Natural killer cell (primary cell): ENCODE measurements at regions of chr1 and their contacts with region 1.

Region 1: GRCh38 chr1:208500375-208500774 is 256.2 kb upstream of the PLXNA2 start:
- DNase-seq: no peak
- ATAC-seq: no peak
- H3K4me3 ChIP-seq: no peak overlapping the region
- H3K4me3 Mint-ChIP-seq: no peak overlapping the region
- H3K27ac ChIP-seq: no peak overlapping the region
- H3K27ac Mint-ChIP-seq: no peak overlapping the region
- H3K4me1 ChIP-seq: no peaks in the 10 kb centered on the region
- H3K4me1 Mint-ChIP-seq: no peaks in the 10 kb centered on the region
- H3K27me3 ChIP-seq: no peaks in the 10 kb centered on the region
- H3K27me3 Mint-ChIP-seq: peaks cover 3 to 6% of the 10 kb centered on the region in 2 donors
- CTCF ChIP-seq: no peak

Region 2: GRCh38 chr1:208445758-208446203 is 54.6 kb before region 1 on chr1:
- intact Hi-C with region 1: loop called (anchors 10 kb)
- DNase-seq: no peak
- ATAC-seq: no peak
- H3K4me3 ChIP-seq: no peak overlapping the region
- H3K4me3 Mint-ChIP-seq: no peak overlapping the region
- H3K27ac ChIP-seq: no peak overlapping the region
- H3K27ac Mint-ChIP-seq: no peak overlapping the region
- H3K4me1 ChIP-seq: no peaks in the 10 kb centered on the region
- H3K4me1 Mint-ChIP-seq: no peaks in the 10 kb centered on the region
- H3K27me3 ChIP-seq: no peaks in the 10 kb centered on the region
- H3K27me3 Mint-ChIP-seq: peaks cover 6 to 17% of the 10 kb centered on the region in 2 donors
- CTCF ChIP-seq: no peak

Region 3: GRCh38 chr1:208604295-208604694 is 103.9 kb after region 1 on chr1:
- intact Hi-C with region 1: no loop called
- DNase-seq: no peak
- ATAC-seq: no peak
- H3K4me3 ChIP-seq: no peak overlapping the region
- H3K4me3 Mint-ChIP-seq: no peak overlapping the region
- H3K27ac ChIP-seq: no peak overlapping the region
- H3K27ac Mint-ChIP-seq: no peak overlapping the region
- H3K4me1 ChIP-seq: no peaks in the 10 kb centered on the region
- H3K4me1 Mint-ChIP-seq: no peaks in the 10 kb centered on the region
- H3K27me3 ChIP-seq: no peaks in the 10 kb centered on the region
- H3K27me3 Mint-ChIP-seq: peaks cover 0 to 5% of the 10 kb centered on the region in 2 donors
- CTCF ChIP-seq: no peak